Cardiac septum (tissue), 1 donor: ENCODE measurements at regions of chr10 and their contacts with region 1.

Region 1: DNA sequence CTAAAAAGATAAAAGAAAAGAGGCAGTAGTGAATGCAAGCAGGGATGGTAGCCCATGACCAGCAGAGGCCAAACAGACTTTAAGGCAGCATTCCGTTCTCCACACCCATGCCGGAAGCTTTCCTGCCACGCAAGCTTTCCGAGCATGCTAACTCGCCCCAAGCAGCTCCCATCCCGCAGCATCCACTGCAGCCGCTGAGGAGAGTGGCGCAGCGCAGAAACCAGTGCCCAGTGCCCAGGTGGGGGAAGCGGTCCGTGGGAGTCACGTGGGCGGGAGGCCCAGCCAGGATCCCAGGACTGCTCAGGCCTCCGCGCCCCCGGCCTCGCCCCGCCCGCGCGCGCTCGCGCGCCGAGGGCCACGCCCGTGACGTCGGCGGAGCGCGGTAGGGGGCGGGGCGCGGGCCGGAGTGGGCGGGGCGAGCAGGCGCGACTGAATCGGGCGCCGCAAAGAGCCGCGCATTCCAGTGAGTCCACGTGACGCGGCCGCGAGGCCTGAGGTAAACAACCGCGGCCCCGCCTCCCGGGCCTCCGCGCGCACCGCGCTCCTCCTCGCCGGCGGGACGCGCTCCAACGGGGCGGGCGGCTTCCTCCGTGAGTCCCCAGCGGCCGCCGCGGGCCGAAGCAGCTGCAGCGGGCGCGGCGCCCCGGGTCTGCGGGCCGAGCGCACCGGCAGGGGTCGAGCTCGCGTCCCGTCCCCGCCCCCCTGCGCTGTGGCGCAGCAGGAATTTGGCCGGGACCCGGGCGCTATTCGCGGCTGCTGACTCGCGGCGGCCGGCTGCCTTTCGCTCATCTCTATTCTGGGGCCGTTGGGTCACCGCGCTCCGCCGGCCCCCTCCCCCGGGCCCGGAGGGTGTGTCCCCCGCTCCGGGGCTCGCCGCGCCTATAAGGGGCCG is at the start of gene OTUD1:
- DNase-seq: peak; percentile 98
- total RNA-seq, gene OTUD1: 38.2 TPM

Region 2: GRCh38 chr10:23270531-23270930 is 168.3 kb before region 1 on chr10:
- intact Hi-C with region 1: no loop called
- DNase-seq: no peak

Region 3: DNA sequence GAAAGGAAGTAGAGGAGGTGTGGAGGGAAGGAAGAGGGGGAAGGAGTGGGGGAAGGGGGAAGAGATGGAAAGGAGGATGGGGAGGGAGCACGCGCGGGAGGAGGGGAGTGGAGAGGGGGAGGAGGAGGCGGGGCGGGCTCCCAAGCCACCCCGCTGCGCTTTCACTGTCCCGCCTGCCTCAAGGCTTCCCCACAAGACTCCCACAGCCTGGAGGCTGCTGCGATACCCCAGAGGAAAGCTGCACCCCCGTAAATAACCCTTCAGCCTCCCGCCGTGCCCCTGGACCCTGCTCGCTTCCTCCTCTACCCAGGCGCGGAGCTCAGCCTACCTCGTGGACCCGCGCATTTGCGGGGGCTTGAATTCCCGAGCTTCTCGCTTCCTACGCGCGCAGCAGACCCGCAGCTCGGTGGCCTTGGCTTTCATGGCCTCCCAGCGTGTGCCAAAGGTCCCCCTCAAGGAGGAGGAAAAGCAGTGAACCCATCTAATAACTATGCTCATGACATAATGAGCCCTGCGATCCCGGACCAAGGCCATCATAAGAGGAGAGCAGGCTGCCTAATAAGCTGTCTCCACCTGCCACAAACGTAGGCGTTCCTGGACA is 94.5 kb before region 1 on chr10 and contains the start of gene C10orf67:
- intact Hi-C with region 1: loop called (anchors 2 kb)
- DNase-seq: no peak
- total RNA-seq, gene C10orf67: 0.35 TPM

Region 4: GRCh38 chr10:23399701-23400144 is 39.1 kb before region 1 on chr10:
- intact Hi-C with region 1: loop called (anchors 2 kb)
- DNase-seq: peak; percentile 79